Activated naive CD4-positive, alpha-beta T cell treated with anti-CD3 and anti-CD28 coated beads, Interleukin-2, amount 10 ng/mL, durations not matched to agents 7 days and 5 days (primary cell): ENCODE measurements at regions of chr15 and their contacts with region 1.

Region 1: DNA sequence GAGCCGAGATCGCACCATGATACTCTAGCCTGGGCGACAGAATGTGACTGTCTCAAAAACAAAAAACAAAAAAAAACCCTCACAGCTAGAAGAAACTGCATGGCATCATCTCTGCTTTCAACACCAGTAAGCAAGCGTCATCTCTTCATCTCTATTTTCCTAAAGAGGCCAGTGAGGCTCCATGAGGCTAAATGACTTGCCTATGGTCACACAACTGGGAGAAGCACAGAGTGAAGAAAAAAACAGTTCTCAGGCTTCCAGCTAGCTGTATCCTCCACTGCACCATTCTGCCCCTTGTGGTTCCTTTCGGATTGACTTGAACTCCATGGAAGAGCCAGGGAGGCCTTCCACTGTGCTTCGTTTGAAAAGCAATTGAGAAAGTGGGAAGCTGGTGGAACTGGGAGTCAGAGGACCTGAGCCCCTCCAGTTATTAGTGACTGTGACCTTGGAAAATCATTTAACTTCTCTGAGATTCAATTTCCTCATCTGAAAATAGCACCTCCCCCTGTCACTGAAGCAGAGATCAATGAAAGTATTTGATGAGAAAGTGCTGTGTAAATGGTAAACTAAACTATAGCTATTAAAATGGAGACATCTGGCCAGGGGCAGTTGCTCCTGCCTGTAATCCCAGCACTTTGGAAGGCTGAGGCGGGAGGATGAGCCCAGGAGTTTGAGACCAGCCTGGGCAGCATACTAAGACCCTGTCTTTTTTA is 32.1 kb upstream of the DENND4A start:
- DNase-seq: peak; percentile 42
- H3K4me3 Mint-ChIP-seq: no peak overlapping the region
- H3K27ac Mint-ChIP-seq: no peak overlapping the region
- H3K4me1 Mint-ChIP-seq: peaks cover 57% of the 10 kb centered on the region
- H3K27me3 Mint-ChIP-seq: no peaks in the 10 kb centered on the region

Region 2: DNA sequence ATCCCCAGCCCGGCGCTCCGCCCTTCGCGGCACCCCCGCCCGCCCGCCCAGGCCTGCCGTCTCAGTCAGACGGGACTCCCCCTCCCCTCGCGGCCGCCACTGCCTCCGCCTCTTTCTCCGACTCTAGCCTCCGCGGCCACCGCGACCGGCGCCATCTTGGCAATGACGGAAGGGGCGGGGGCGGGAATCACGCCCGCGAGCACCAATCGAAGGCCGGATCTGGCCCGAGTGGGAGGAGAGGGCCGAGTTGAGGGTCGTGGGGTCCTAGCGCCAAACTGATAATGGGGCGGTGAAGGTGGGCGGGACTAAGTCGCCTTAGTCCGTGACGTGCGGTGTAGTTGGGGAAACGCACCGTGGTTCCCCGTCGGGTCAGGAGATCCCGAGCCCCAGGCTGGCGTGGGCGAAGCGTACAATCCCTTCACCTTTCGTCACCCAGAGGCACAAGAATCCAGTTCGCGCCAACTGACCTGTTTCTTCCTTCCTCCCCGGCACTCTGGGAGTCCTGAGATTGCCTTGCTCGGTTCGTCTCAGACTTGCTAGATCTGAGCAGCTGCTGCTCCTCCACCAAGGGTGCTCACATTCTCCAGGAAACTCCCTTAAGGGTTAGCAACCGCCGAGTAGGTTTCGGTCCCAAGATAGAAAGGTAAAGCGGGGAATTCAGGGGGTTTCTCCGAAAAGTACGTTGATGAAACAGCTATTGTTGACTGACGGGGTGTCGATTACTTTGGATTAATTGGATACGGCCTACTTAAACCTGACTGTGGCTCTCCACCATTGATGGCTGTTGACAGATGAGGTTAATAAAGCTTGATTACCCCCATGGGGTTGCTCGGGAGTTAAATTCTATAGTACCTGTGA is 31.8 kb before region 1 on chr15 and contains the start of gene DENND4A:
- CTCF ChIA-PET with region 1: interaction called, 10 read pairs
- DNase-seq: peak; percentile 98
- H3K4me3 Mint-ChIP-seq: peak within 1 kb of the TSS; percentile 85
- H3K27ac Mint-ChIP-seq: peak within 1 kb of the TSS; percentile 97
- H3K4me1 Mint-ChIP-seq: peaks cover 69% of the 10 kb centered on the region
- H3K27me3 Mint-ChIP-seq: no peaks in the 10 kb centered on the region

Region 3: DNA sequence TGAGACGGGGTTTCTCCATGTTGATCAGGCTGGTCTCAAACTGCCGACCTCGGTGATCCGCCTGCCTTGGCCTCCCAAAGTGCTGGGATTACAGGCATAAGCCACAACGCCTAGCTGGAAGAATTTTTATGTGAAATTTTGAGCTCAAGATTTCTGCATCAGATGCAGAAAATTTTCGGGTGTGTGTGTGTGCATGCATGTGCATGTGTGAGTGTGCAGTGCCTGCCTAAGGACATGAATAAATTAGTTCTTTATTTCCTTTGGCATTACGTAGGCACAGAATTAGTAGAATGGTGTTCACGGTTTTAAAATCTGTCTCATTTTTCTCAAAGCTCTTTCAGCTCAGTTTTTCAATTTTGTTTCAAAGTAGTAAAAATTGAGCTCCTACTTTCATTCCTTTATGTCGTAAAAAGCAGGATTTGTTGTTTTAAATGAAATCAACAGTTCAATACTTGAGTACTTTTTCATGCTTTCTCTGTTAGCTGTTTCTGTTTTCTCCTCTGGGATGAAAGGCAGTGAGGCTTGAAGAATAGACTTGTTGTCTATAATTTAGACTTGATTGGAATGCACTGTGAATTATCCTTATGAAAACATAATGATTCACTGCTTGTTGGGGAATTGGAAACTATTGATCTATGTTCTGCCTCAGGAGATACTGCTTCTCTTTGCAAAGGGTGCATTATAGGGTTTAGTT is 21.8 kb after region 1 on chr15:
- CTCF ChIA-PET with region 1: no interaction called
- DNase-seq: no peak
- H3K4me3 Mint-ChIP-seq: no peak overlapping the region
- H3K27ac Mint-ChIP-seq: no peak overlapping the region
- H3K4me1 Mint-ChIP-seq: no peaks in the 10 kb centered on the region
- H3K27me3 Mint-ChIP-seq: peaks cover 12% of the 10 kb centered on the region